Naive thymus-derived CD4-positive, alpha-beta T cell (primary cell): ENCODE measurements at regions of chr1 and their contacts with region 1.

Region 1: DNA sequence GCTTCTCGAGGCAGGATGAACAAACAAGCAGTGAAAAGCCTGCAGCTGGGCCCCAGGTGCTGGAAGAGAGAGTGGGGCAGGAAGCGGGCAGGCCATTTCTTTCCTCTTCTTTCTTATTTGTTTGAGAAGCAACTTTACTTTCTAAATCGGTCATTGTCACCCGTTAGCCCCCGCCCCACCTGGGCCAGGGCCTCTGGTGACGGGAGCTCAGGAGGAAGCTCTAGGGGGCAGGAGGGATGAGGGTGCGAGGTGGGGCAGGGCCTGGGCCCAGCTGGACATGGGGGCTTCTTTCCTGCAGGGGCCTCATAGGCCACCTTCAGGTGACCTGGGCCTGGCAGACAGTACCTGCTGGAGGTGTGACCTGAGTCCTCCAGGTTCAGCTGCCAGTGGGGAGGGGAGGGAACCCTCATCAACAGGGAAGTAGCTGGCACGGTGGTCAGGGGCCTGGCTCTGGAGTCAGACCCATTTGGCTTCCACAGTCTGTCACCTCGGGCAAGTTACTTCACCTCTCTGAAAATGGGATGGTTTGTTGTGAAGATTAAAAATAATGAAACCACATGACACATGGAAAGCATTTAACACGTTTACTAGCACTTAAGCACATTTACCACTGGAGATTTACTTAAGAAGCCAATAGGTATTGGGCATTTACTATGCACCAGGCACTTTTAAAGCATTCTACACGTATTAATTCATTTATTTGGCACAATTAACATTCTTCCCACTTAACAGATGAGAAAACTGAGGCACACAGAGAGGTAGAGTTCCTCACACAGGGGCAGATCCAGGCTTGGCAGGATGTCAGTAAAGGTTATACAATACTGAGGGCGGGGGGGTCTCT is 54.1 kb upstream of the ID3 start:
- DNase-seq: peak in 8 of 9 donors; percentile 52 to 72 (median 64)
- ATAC-seq: peak; percentile 57
- H3K4me3 ChIP-seq: peak overlapping the region; percentile 14
- H3K4me3 Mint-ChIP-seq: peak overlapping the region; percentile 48 to 84 (median 71)
- H3K27ac ChIP-seq: peak overlapping the region; percentile 71
- H3K27ac Mint-ChIP-seq: peak overlapping the region; percentile 91 to 98 (median 96)
- H3K4me1 ChIP-seq: peaks cover 41 to 68% of the 10 kb centered on the region in 2 donors
- H3K4me1 Mint-ChIP-seq: peaks cover 45 to 88% (median 85%) of the 10 kb centered on the region in 7 donors
- H3K27me3 ChIP-seq: no peaks in the 10 kb centered on the region
- H3K27me3 Mint-ChIP-seq: peaks cover 0 to 2% (median 0%) of the 10 kb centered on the region in 5 donors

Region 2: DNA sequence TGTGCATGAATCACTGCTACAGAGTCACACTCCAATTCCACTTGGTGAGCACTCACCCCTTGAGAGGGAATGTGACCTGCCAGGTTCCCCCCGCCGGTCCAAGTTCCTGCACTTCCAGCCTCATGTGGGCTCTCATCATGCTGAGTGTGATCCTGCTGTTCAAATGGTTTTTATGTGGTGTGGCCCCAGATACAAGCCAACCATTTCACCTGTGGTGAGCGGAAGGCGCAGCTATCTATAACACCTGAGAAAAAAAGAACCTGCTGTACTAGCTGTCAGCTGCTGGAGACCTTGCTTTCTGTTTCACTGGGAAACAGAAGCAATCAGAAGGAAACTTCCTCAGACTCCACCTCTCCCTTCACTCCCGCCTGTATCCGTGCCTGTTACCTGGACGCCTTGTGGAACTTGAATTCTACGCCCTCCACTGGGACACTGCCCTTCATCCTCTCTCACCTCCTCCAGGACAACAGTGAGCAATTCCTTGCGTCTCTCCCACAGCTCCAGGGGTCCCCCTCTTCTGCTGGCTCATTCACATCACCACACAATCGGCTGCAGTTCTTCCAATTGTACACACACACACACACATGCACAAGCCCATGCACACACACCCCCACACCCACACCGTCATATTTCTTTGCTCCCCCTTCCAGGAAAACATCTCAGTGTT is 13.8 kb after region 1 on chr1:
- CTCF ChIA-PET with region 1: interaction called, 71 read pairs
- POLR2A ChIA-PET with region 1: interaction called, 145 read pairs
- intact Hi-C with region 1: loop called in 1 of 2 experiments (anchors 2 kb)
- DNase-seq: peak in 7 of 9 donors; percentile 55 to 72 (median 67)
- ATAC-seq: peak; percentile 90
- H3K4me3 ChIP-seq: peak overlapping the region; percentile 69
- H3K4me3 Mint-ChIP-seq: peak overlapping the region; percentile 81 to 99 (median 96)
- H3K27ac ChIP-seq: peak overlapping the region; percentile 78
- H3K27ac Mint-ChIP-seq: peak overlapping the region; percentile 77 to 98 (median 96)
- H3K4me1 ChIP-seq: peaks cover 0 to 37% of the 10 kb centered on the region in 2 donors
- H3K4me1 Mint-ChIP-seq: peaks cover 33 to 82% (median 73%) of the 10 kb centered on the region in 7 donors
- H3K27me3 ChIP-seq: no peaks in the 10 kb centered on the region
- H3K27me3 Mint-ChIP-seq: no peaks in the 10 kb centered on the region